Gastrocnemius medialis (tissue), 4 donors: ENCODE measurements at regions of chr2 and their contacts with region 1.

Region 1: GRCh38 chr2:219294356-219295351 is 14.5 kb downstream of the PTPRN start:
- DNase-seq: peak; percentile 64 to 80
- ATAC-seq: peak; percentile 85 to 86
- H3K4me3 ChIP-seq: peak overlapping the region; percentile 57 to 63 (median 58)
- H3K27ac ChIP-seq: peak overlapping the region; percentile 68 to 82 (median 77)
- H3K4me1 ChIP-seq: peaks cover 8 to 10% of the 10 kb centered on the region in 2 donors
- H3K27me3 ChIP-seq: no peaks in the 10 kb centered on the region
- CTCF ChIP-seq: peak; percentile 95 to 99 (median 98)
- POLR2A ChIP-seq: peak in 1 of 2 donors; percentile 30

Region 2: GRCh38 chr2:219253753-219254590 is 40.7 kb before region 1 on chr2 and contains the start of gene TUBA4A:
- in situ Hi-C with region 1: no loop called
- intact Hi-C with region 1: loop called (anchors 2 kb)
- DNase-seq: peak; percentile 76 to 88
- ATAC-seq: peak; percentile 69 to 72
- H3K4me3 ChIP-seq: peak within 1 kb of the TSS; percentile 68 to 88 (median 76)
- H3K27ac ChIP-seq: peak within 1 kb of the TSS; percentile 91 to 99 (median 96)
- H3K4me1 ChIP-seq: peaks cover 36 to 53% of the 10 kb centered on the region in 2 donors
- H3K27me3 ChIP-seq: no peaks in the 10 kb centered on the region
- CTCF ChIP-seq: peak in 3 of 5 experiments; percentile 23 to 34 (median 30)
- POLR2A ChIP-seq: peak; percentile 98
- total RNA-seq, gene TUBA4A: 351 to 797 (median 386) TPM